CD4-positive, alpha-beta T cell (primary cell): ENCODE measurements at regions of chr12 and their contacts with region 1.

Region 1: GRCh38 chr12:11085419-11085818 is 6.7 kb downstream of the TAS2R43 start:
- DNase-seq: no peak
- ATAC-seq: no peak
- H3K4me3 ChIP-seq: no peak overlapping the region
- H3K4me3 Mint-ChIP-seq: no peak overlapping the region
- H3K27ac ChIP-seq: no peak overlapping the region
- H3K27ac Mint-ChIP-seq: no peak overlapping the region
- H3K4me1 ChIP-seq: no peaks in the 10 kb centered on the region
- H3K4me1 Mint-ChIP-seq: peaks cover 15% of the 10 kb centered on the region
- H3K27me3 ChIP-seq: no peaks in the 10 kb centered on the region
- H3K27me3 Mint-ChIP-seq: no peaks in the 10 kb centered on the region
- CTCF ChIP-seq: no peak

Region 2: DNA sequence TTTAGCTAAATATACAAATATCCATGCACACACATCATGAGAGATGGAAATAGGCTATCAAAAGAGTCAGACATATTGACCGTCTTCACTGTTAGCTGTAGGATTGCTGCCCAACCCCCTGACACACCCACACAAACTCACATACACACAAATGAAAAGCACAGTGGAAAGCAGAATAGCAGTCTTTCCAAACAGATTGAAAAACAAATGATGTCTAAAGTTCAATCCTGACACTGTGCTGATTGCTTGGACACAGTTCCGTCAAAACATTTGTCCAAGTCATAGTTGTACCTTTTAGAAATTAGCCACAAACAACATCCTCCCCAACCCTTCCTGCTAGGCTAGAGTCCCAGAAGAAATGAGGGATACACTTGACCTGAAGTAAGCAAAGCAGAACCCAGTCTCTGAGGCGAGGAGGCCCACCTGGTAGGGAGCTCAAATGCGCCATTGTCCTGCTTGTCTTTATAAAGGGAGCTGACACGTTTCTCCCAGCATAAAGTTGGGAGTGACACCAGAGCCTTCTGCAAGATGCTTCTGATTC is 156.6 kb before region 1 on chr12 and contains the start of gene PRH2:
- CTCF ChIA-PET with region 1: no interaction called
- POLR2A ChIA-PET with region 1: no interaction called
- intact Hi-C with region 1: no loop called
- DNase-seq: no peak
- ATAC-seq: no peak
- H3K4me3 ChIP-seq: no peak within 1 kb of the TSS
- H3K4me3 Mint-ChIP-seq: no peak within 1 kb of the TSS
- H3K27ac ChIP-seq: no peak within 1 kb of the TSS
- H3K27ac Mint-ChIP-seq: no peak within 1 kb of the TSS
- H3K4me1 ChIP-seq: no peaks in the 10 kb centered on the region
- H3K4me1 Mint-ChIP-seq: no peaks in the 10 kb centered on the region
- H3K27me3 ChIP-seq: no peaks in the 10 kb centered on the region
- H3K27me3 Mint-ChIP-seq: no peaks in the 10 kb centered on the region
- CTCF ChIP-seq: no peak
- total RNA-seq, gene PRH2: not detected

Region 3: GRCh38 chr12:11059784-11060183 is 25.6 kb before region 1 on chr12:
- CTCF ChIA-PET with region 1: no interaction called
- POLR2A ChIA-PET with region 1: no interaction called
- intact Hi-C with region 1: loop called in 1 of 2 experiments (anchors 1 kb)
- DNase-seq: no peak
- ATAC-seq: no peak
- H3K4me3 ChIP-seq: no peak overlapping the region
- H3K4me3 Mint-ChIP-seq: no peak overlapping the region
- H3K27ac ChIP-seq: no peak overlapping the region
- H3K27ac Mint-ChIP-seq: no peak overlapping the region
- H3K4me1 ChIP-seq: no peaks in the 10 kb centered on the region
- H3K4me1 Mint-ChIP-seq: peaks cover 31% of the 10 kb centered on the region
- H3K27me3 ChIP-seq: no peaks in the 10 kb centered on the region
- H3K27me3 Mint-ChIP-seq: no peaks in the 10 kb centered on the region
- CTCF ChIP-seq: no peak